ENCODE measurements at regions of chr6 and their contacts with region 1.

Region 1: GRCh38 chr6:144343701-144344428 is 58.7 kb downstream of the UTRN start:
- DNase-seq: peak; percentile 63
- H3K4me3 Mint-ChIP-seq: peak overlapping the region; percentile 88
- H3K27ac Mint-ChIP-seq: peak overlapping the region; percentile 99
- H3K4me1 Mint-ChIP-seq: peaks cover 67% of the 10 kb centered on the region
- H3K27me3 Mint-ChIP-seq: no peaks in the 10 kb centered on the region

Region 2: DNA sequence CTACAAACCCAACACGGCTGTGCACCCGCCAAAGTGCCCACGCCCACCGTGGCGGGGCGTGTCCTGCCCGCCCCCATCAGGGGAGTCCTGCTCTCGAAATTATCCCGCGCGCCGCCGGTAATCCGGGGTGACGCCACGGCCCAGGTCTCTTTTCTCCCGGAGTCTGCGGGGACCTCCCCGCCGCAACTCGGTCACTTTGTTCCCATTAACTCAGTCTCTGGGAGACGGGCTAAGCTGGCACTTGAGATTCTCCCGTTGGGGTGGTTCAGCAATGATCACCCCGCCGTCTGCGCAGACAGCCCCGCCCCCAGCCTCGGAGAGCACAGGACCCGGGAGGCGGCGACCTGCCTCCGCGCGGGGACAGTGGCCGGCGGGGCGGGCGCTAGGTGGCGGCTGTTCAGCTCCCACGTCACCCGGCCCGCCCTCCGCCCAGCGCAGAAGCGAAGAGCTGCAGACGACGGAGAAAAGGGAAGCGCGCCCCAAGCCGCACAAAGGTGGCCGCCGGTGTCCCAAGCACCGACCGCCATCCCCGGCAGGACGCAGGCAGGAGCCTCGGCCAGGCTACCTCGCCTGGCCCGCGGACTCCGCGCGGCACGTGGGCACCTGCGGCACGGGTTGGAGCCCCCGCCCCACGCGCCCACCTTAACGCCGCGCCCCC is 280.0 kb before region 1 on chr6:
- CTCF ChIA-PET with region 1: no interaction called
- intact Hi-C with region 1: loop called (anchors 1 kb)
- DNase-seq: peak; percentile 86
- H3K4me3 Mint-ChIP-seq: peak overlapping the region; percentile 75
- H3K27ac Mint-ChIP-seq: peak overlapping the region; percentile 43
- H3K4me1 Mint-ChIP-seq: peaks cover 40% of the 10 kb centered on the region
- H3K27me3 Mint-ChIP-seq: no peaks in the 10 kb centered on the region

Region 3: GRCh38 chr6:144149891-144150709 is 193.8 kb before region 1 on chr6 and contains the start of gene STX11:
- CTCF ChIA-PET with region 1: no interaction called
- intact Hi-C with region 1: loop called (anchors 1 kb)
- DNase-seq: peak; percentile 91
- H3K4me3 Mint-ChIP-seq: peak within 1 kb of the TSS; percentile 81
- H3K27ac Mint-ChIP-seq: peak within 1 kb of the TSS; percentile 93
- H3K4me1 Mint-ChIP-seq: peaks cover 40% of the 10 kb centered on the region
- H3K27me3 Mint-ChIP-seq: no peaks in the 10 kb centered on the region
- total RNA-seq, gene STX11: 17.2 to 17.5 TPM

Region 4: GRCh38 chr6:144284783-144285547 is 58.9 kb before region 1 on chr6 and contains the start of gene UTRN:
- CTCF ChIA-PET with region 1: interaction called, 3 read pairs
- intact Hi-C with region 1: loop called (anchors 1 kb)
- DNase-seq: peak; percentile 64
- H3K4me3 Mint-ChIP-seq: peak within 1 kb of the TSS; percentile 86
- H3K27ac Mint-ChIP-seq: no peak within 1 kb of the TSS
- H3K4me1 Mint-ChIP-seq: peaks cover 12% of the 10 kb centered on the region
- H3K27me3 Mint-ChIP-seq: peaks cover 21% of the 10 kb centered on the region
- total RNA-seq, gene UTRN: 35.3 to 39.9 TPM

Region 5: DNA sequence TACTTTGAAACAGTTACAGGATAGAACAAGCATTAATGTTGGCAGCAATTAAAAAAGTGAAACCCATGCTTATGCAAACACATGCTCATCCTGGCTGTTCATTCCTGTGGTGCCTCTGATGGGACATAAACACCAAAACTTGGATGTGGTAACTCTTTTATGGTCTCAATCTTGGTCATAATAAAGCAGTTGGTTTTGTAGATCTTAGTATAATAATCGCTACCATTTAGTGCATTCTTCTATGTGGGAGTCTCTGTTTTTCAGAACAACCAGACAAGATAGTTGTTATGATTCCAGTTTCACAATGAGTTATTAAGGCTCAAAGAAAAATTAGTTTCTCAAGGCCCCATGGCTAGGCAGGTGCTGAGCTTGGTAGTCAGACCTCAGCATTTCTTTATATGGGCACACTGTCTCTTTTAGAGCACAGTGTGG is 125.3 kb after region 1 on chr6:
- CTCF ChIA-PET with region 1: no interaction called
- intact Hi-C with region 1: loop called (anchors 1 kb)
- DNase-seq: peak; percentile 43
- H3K4me3 Mint-ChIP-seq: peak overlapping the region; percentile 42
- H3K27ac Mint-ChIP-seq: peak overlapping the region; percentile 46
- H3K4me1 Mint-ChIP-seq: peaks cover 20% of the 10 kb centered on the region
- H3K27me3 Mint-ChIP-seq: no peaks in the 10 kb centered on the region

Region 6: DNA sequence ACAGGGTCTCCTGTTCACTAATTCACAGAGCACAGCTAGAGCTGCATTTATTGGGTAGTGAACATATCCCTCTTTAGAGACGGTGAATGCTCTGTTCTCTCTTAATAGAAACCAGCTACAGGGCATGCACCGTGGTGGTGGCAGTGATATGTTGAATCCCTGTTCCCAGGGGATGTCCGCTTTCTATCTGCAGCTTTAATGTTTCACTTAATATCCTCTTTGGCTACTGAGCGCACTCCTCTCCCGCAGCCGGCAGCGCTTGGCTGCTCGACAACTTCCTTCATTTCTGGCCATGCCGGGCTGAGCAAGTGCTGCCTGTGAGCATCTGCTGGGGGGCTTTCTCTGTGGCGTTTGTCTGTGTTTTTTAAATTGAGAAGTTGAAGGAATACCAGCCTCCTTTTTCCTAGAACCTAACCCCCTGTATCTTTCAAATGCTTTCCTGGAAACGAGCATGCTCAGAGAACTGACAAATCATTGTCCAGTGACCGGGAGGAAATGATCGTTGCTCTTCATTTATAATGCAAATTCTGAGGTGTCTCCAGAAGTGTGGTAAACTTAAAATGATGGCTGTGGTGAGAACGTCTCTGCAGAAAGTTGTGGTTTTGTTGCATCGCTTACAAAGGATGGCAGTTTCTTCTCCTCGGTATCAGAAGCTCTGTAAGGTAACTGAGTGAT is 239.2 kb after region 1 on chr6:
- CTCF ChIA-PET with region 1: no interaction called
- intact Hi-C with region 1: loop called (anchors 1 kb)
- DNase-seq: peak; percentile 57
- H3K4me3 Mint-ChIP-seq: peak overlapping the region; percentile 67
- H3K27ac Mint-ChIP-seq: peak overlapping the region; percentile 20
- H3K4me1 Mint-ChIP-seq: peaks cover 15% of the 10 kb centered on the region
- H3K27me3 Mint-ChIP-seq: no peaks in the 10 kb centered on the region

Region 7: GRCh38 chr6:144867761-144868160 is 523.9 kb after region 1 on chr6:
- CTCF ChIA-PET with region 1: no interaction called
- intact Hi-C with region 1: no loop called
- DNase-seq: no peak
- H3K4me3 Mint-ChIP-seq: no peak overlapping the region
- H3K27ac Mint-ChIP-seq: no peak overlapping the region
- H3K4me1 Mint-ChIP-seq: peaks cover 4% of the 10 kb centered on the region
- H3K27me3 Mint-ChIP-seq: peaks cover 22% of the 10 kb centered on the region